ENCODE measurements at regions of chr17 and their contacts with region 1.

Region 1: GRCh38 chr17:55513885-55514591 is 2.8 kb upstream of the SMIM36 start:
- DNase-seq: peak; percentile 59
- CTCF ChIP-seq: peak; percentile 88

Region 2: DNA sequence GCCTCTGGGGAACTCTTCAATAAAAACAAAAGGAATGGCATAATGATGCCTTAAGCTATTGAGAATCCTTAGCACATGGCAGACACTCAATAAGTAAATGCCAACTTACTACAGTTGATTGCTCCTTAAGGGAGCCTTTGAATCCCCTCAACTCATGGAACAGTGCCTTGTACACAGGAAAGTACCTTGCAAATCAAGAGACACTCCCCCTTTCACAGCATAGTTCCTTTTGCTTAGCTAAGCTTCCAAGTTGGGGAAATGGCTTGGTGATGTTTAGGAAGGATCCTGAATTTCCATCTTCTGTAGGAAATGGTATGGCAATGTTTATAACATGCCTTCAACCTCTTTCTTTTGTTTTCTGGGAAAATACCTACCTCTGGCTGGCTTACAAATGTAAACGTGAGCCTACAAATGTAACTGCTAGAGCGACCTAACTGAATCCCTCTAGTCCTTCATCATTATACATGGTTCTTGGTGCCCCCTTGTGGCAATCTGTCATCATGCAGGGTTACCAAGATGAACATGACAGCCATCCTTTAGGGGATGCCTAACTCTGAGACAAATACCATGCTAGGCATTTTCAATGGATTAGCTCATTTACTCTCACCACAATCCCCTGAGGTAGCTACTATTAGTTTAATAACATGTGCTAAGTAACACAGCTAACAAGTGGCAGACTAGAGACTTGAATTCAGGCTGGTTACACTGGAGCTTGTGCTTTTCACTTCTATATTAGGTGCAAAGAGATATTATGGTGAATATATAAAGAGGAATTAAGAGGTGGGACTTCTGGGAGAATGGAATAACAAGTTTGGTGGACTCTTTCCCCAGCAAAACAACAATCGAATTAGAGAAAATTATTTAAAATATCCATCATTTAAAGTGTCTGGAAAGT is 157.4 kb before region 1 on chr17:
- in situ Hi-C with region 1: loop called (anchors 10 kb)
- DNase-seq: peak; percentile 74
- CTCF ChIP-seq: peak; percentile 84

Region 3: GRCh38 chr17:55576996-55577586 is 63.1 kb after region 1 on chr17:
- in situ Hi-C with region 1: no loop called
- DNase-seq: peak; percentile 42
- CTCF ChIP-seq: no peak

Region 4: GRCh38 chr17:55693254-55694216 is 179.5 kb after region 1 on chr17:
- in situ Hi-C with region 1: no loop called
- DNase-seq: no peak
- CTCF ChIP-seq: no peak

Measured in GM13977 (cell line).